ENCODE measurements at regions of chr5 and their contacts with region 1.

Region 1: GRCh38 chr5:120886351-120886860 is 422.3 kb downstream of the PRR16 start:
- DNase-seq: no peak
- ATAC-seq: no peak
- H3K4me3 ChIP-seq: no peak overlapping the region
- H3K27ac ChIP-seq: no peak overlapping the region
- H3K4me1 ChIP-seq: no peaks in the 10 kb centered on the region
- H3K27me3 ChIP-seq: no peaks in the 10 kb centered on the region
- CTCF ChIP-seq: no peak

Region 2: GRCh38 chr5:120624021-120624563 is 262.3 kb before region 1 on chr5:
- CTCF ChIA-PET with region 1: interaction called, 10 read pairs
- POLR2A ChIA-PET with region 1: no interaction called
- in situ Hi-C with region 1: no loop called
- intact Hi-C with region 1: no loop called
- DNase-seq: no peak
- ATAC-seq: no peak
- H3K4me3 ChIP-seq: no peak overlapping the region
- H3K27ac ChIP-seq: no peak overlapping the region
- H3K4me1 ChIP-seq: no peaks in the 10 kb centered on the region
- H3K27me3 ChIP-seq: no peaks in the 10 kb centered on the region
- CTCF ChIP-seq: no peak